MCF 10A (cell line): ENCODE measurements at regions of chr1 and their contacts with region 1.

Region 1: GRCh38 chr1:227805606-227806197 is 9.8 kb upstream of the PRSS38 start:
- DNase-seq: peak; percentile 100
- H3K4me3 Mint-ChIP-seq: no peak overlapping the region
- H3K27ac Mint-ChIP-seq: peak overlapping the region; percentile 93
- H3K4me1 Mint-ChIP-seq: peaks cover 27% of the 10 kb centered on the region
- H3K27me3 Mint-ChIP-seq: no peaks in the 10 kb centered on the region
- CTCF ChIP-seq: peak; percentile 36

Region 2: DNA sequence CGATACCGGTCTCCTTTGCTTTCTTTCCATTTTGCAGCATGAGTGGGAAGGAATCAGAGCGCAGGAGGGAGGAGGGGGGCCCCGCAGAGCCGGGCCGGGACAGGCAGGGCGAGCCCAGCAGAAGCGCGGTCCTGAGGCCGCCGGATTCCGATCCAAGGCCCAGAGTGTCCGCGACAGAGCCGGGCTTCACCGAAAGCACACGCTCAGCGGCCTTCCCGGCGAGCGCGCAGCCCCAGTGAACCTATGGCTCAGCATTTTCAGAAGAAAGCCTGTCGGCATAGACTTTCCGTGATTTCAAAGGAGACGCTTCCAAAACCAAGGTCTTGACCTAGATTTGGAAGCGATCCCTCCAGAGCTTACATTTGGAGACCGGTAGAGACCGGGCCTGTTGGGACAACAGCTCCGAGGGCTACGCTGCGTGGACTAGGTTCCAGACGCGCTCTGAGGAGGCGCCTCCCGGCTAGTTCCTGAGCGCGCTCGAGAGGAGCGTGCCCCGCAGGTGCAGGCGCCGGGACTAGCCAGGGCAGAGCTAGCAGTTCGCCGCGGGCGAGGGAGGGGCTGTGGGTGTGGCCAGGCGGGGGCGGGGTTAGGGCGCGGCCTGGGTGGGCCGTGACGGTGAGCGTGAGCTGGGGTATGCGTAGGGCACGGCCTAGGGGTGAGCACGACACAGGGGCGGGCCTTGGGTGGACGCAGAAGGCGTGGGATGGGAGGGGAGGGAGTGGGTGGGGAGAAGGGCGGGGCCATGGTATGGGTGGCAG is 18.0 kb before region 1 on chr1:
- CTCF ChIA-PET with region 1: interaction called, 4 read pairs
- POLR2A ChIA-PET with region 1: interaction called, 11 read pairs
- intact Hi-C with region 1: loop called (anchors 1 kb)
- DNase-seq: peak; percentile 97
- H3K4me3 Mint-ChIP-seq: peak overlapping the region; percentile 71
- H3K27ac Mint-ChIP-seq: peak overlapping the region; percentile 49
- H3K4me1 Mint-ChIP-seq: peaks cover 5% of the 10 kb centered on the region
- H3K27me3 Mint-ChIP-seq: no peaks in the 10 kb centered on the region
- CTCF ChIP-seq: no peak

Region 3: GRCh38 chr1:227816750-227817446 is 11.2 kb after region 1 on chr1:
- CTCF ChIA-PET with region 1: interaction called, 4 read pairs
- POLR2A ChIA-PET with region 1: interaction called, 16 read pairs
- intact Hi-C with region 1: no loop called
- DNase-seq: no peak
- H3K4me3 Mint-ChIP-seq: no peak overlapping the region
- H3K27ac Mint-ChIP-seq: no peak overlapping the region
- H3K4me1 Mint-ChIP-seq: no peaks in the 10 kb centered on the region
- H3K27me3 Mint-ChIP-seq: peaks cover 20% of the 10 kb centered on the region
- CTCF ChIP-seq: no peak

Region 4: DNA sequence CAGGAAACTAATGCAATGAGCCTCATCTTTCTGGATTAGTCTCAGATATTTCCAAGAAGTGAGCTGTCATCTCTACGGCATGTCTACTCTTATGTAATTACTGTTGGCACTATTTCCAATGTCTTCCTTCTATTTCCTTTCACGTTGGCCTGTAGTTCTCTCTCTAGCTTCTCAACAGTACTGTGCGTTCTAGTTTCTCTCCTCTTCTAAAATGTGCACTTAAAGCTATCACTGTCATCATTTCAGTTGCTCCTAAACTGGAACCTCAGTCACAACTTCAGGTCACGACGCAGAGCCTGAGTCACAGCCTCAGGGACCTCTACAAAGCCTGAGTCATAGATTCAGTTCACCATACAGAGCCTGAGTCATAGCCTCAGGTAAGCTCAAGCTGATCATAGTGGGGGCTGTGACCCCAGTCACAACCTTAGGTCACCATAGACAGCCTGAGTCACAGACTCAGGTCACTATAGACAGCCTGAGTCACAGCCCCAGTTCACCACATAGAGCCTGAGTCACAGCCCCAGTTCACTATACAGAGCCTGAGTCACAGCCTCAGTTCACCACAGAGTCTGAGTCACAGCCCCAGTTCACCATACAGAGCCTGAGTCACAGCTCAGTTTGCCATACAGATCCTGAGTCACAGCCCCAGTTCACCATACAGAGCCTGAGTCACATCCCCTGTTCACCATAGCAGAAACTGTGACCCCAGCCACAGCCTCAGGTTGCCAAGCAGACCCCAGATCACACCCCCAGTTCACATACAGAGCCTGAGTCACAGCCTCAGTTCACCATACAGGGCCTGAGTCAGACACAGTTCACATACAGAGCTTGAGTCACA is 129.0 kb after region 1 on chr1:
- CTCF ChIA-PET with region 1: interaction called, 6 read pairs
- POLR2A ChIA-PET with region 1: interaction called, 35 read pairs
- intact Hi-C with region 1: loop called (anchors 1 kb)
- DNase-seq: peak; percentile 99
- H3K4me3 Mint-ChIP-seq: no peak overlapping the region
- H3K27ac Mint-ChIP-seq: peak overlapping the region; percentile 18
- H3K4me1 Mint-ChIP-seq: peaks cover 16% of the 10 kb centered on the region
- H3K27me3 Mint-ChIP-seq: no peaks in the 10 kb centered on the region
- CTCF ChIP-seq: no peak